Breast epithelium (tissue), 4 donors: ENCODE measurements at regions of chr2 and their contacts with region 1.

Region 1: GRCh38 chr2:129120464-129120863 is 801.8 kb upstream of the HS6ST1 start:
- DNase-seq: no peak
- H3K4me3 ChIP-seq: no peak overlapping the region
- H3K27ac ChIP-seq: no peak overlapping the region
- H3K4me1 ChIP-seq: no peaks in the 10 kb centered on the region
- H3K27me3 ChIP-seq: no peaks in the 10 kb centered on the region
- CTCF ChIP-seq: no peak
- POLR2A ChIP-seq: no peak

Region 2: DNA sequence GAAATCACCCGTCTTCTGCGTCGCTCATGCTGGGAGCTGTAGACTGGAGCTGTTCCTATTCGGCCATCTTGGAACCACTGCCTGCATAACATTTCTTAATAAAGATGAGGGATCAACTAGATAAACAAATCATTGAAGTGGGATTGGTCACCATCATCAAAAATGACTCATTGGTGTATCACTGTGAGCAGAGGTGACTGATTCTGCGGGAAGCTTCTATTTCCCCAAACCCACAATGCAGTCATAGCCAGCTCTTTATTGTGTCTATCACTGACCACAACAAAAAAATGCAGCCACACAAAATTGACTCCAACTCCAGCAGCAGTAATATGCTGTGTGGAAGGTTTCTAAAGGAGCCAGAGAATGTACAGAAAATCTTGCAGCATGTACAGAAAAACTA is 171.1 kb before region 1 on chr2:
- intact Hi-C with region 1: loop called (anchors 5 kb)
- DNase-seq: no peak
- H3K4me3 ChIP-seq: no peak overlapping the region
- H3K27ac ChIP-seq: no peak overlapping the region
- H3K4me1 ChIP-seq: no peaks in the 10 kb centered on the region
- H3K27me3 ChIP-seq: no peaks in the 10 kb centered on the region
- CTCF ChIP-seq: no peak
- POLR2A ChIP-seq: no peak

Region 3: DNA sequence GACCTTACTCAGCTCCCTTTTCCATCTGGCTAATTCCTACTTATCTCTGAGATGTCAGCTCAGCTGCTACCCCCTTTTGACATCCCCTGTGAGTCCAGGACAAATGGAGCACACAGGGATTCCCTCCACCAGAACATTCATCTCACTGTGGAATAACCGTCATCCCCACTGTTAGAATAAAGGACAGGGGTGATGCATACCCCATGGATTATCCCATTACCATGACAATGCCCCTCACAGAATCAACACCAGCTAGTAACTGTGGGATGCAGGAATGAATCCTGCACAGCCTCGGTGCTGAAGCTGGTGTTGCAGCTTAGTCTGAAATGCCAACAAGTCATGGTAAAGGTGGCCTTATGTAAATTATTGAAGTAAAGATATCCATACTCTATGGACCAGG is 234.2 kb after region 1 on chr2:
- intact Hi-C with region 1: no loop called
- DNase-seq: no peak
- H3K4me3 ChIP-seq: no peak overlapping the region
- H3K27ac ChIP-seq: no peak overlapping the region
- H3K4me1 ChIP-seq: no peaks in the 10 kb centered on the region
- H3K27me3 ChIP-seq: no peaks in the 10 kb centered on the region
- CTCF ChIP-seq: no peak
- POLR2A ChIP-seq: no peak

Region 4: GRCh38 chr2:130154773-130155765 is 1034.6 kb after region 1 on chr2:
- intact Hi-C with region 1: no loop called
- DNase-seq: no peak
- H3K4me3 ChIP-seq: no peak overlapping the region
- H3K27ac ChIP-seq: no peak overlapping the region
- H3K4me1 ChIP-seq: no peaks in the 10 kb centered on the region
- H3K27me3 ChIP-seq: no peaks in the 10 kb centered on the region
- CTCF ChIP-seq: no peak
- POLR2A ChIP-seq: no peak